ENCODE measurements at regions of chr10 and their contacts with region 1.

Region 1: DNA sequence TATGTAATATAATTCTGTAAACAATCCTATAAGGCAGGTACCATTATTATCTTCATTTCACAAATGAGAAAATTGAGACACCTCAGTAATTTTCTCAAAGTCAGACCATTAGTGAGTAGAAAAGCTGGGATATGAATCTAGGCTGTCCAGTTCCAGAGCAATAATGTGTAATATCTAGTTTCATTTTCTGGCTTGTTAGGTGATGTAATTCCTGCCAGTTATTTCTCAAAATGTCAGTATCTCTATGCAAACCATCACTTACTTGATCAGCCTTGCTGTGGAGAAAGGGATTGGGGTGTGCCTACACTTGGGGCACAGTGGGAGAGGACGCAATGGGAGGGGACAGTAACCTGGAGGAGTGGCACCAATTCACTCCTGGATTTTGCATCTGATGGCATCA is 157.5 kb downstream of the LYZL1 start:
- DNase-seq: no peak
- H3K4me3 ChIP-seq: no peak overlapping the region
- CTCF ChIP-seq: no peak

Region 2: DNA sequence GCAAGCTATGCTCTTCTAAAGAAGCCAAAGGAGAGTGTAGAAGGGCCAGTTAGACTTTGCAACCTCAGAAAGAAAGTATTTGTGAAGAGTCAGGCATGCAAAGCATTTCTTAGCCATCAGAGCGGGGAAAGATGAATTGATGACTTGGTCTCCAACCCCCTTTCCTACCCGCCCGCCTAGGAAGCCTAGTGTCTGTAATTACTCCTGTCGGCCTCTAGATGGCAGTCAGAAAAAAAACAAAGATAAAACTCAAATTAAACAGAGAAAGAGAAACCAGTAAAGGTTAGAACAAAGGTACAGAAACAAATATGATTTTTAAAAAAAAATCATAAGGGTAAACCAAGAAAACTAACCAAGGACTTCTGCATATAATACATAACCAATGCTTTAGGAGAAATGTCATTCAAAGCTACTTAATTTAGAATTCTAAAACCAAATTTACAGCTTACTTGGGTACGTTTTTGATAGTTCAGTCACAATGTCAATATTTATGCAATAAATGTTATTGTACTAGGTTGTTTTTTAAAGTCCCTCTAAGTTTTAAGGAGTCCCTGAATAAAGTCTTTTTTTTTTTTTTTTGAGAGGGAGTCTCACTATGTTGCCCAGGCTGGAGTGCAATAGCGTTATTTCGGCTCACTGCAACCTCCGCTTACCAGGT is 59.9 kb before region 1 on chr10:
- CTCF ChIA-PET with region 1: interaction called, 72 read pairs
- POLR2A ChIA-PET with region 1: no interaction called
- DNase-seq: no peak
- H3K4me3 ChIP-seq: no peak overlapping the region
- CTCF ChIP-seq: peak; percentile 43

Region 3: GRCh38 chr10:29424017-29424416 is 22.3 kb before region 1 on chr10:
- CTCF ChIA-PET with region 1: interaction called, 25 read pairs
- POLR2A ChIA-PET with region 1: no interaction called
- DNase-seq: no peak
- H3K4me3 ChIP-seq: no peak overlapping the region
- CTCF ChIP-seq: no peak

Region 4: DNA sequence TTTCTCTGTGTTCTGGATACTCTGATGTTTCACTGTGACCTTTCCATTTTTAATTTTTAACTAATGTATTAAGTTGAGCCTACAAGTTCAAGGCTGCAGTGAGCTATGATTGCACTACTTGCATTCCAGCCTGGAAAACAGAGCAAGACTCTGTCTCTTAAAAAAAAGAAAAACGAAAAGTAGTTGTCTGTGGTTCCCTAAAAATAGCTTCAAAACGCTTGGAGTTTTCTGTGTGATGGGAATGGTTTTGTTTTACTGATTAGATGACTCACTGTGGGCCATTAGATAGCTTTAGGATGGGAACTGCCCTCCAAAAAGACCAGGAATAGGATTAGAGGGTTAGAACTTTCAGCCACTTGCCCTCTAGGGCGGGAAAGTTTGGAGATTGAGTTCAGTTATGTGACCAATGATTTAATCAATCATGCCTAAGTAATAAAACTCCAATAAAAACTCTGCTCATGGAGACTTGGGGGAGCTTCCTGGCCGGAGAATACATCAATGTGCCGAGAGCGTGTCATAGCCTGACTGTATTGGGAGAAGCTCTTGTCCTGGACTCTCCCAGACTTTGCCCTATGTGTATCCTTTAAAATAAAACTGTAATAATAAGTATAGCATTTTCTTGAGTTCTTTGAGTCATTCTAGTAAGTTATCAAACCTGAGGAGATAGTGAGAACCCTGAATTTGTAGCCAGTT is 10.4 kb before region 1 on chr10:
- CTCF ChIA-PET with region 1: interaction called, 56 read pairs
- POLR2A ChIA-PET with region 1: no interaction called
- DNase-seq: peak; percentile 45
- H3K4me3 ChIP-seq: no peak overlapping the region
- CTCF ChIP-seq: no peak

Measured in AG04449 (cell line).